ENCODE measurements at regions of chr2 and their contacts with region 1.

Region 1: GRCh38 chr2:68579689-68580088 is 63.7 kb upstream of the PROKR1 start:
- DNase-seq: no peak
- H3K4me3 ChIP-seq: no peak overlapping the region
- CTCF ChIP-seq: no peak

Region 2: DNA sequence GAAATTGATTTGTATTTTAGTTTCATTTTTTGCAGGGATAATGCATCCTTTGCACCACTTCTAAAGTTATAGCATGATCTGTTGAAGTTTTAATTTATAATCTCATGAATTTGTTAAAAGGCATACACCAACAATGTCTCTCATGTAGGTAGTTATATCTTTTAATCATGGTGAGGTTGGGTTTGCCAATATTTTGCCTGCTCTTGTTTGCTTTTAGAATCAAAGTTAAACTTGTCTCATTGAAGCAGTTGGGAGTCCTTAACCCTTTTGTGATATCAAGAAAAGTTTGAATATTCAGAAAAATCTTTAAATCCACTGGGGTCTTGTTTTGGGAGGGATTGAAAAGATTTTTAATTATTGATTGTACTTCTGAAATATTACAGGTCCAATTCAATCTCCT is 80.6 kb before region 1 on chr2:
- in situ Hi-C with region 1: loop called (anchors 5 kb)
- DNase-seq: no peak
- H3K4me3 ChIP-seq: no peak overlapping the region
- CTCF ChIP-seq: no peak

Measured in astrocyte of the cerebellum (primary cell).